Heart right ventricle (tissue), 16 donors: ENCODE measurements at regions of chr4 and their contacts with region 1.

Region 1: DNA sequence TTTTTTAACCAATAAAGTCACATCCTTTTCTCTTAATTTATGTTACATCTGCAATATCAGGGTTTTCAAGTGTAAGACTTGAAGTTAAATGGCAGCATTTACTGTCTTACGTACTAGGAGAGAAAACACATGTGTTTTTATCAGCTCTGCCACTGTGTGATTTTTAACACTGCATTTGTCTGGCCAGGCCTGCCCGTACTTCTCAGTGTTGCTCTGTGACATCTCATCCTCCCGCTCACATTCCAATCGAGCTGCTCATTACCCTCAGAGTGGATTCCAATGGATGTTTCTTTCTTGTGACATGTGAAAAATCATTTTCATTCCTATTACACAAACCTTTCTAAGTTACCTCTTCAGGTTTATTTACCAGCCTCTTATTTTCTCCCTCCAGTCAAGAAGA is 420.3 kb downstream of the FAT4 start:
- DNase-seq: peak in 1 of 2 donors; percentile 18
- ATAC-seq: peak in 7 of 8 donors; percentile 56 to 96 (median 83)
- H3K4me3 ChIP-seq: no peak overlapping the region
- H3K27ac ChIP-seq: peak overlapping the region in 4 of 10 donors; percentile 3 to 53 (median 23)
- H3K4me1 ChIP-seq: peaks cover 0 to 30% (median 19%) of the 10 kb centered on the region in 9 donors
- H3K27me3 ChIP-seq: no peaks in the 10 kb centered on the region
- CTCF ChIP-seq: no peak

Region 2: DNA sequence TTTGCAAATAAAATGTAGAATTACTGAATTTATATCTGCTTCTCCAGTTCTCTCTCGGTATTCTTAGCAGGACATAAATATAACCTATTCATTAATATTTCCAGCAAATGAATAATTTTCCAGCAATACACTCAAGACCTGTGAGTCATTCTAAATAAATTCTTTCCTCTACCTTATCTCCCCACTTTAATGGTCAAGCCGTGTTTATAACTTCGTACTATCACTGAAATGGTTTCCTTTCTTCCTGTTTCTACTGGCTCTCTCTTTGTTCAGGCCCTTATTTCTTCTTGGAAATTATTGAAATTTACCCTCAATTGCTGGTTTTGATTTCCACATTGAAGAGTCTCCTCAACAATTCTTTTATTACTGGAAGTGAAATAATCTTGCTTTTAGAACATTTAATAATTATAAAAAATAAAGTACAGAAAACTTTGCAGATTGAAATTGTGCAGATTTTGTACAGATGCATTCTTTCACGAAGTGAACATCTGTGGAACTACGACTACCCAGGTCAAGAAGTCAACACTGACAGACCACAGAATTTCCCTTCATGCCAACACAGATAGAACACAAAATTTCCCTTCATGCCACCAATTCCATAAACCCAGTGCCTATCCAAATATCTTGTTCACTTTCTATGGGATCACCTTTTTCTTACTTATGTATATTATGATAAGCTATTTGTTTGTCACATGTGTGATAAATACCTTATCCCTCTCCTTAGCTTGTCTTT is 214.7 kb before region 1 on chr4:
- intact Hi-C with region 1: loop called in 1 of 10 experiments (anchors 10 kb)
- DNase-seq: no peak
- ATAC-seq: peak in 4 of 8 donors; percentile 24 to 77 (median 40)
- H3K4me3 ChIP-seq: no peak overlapping the region
- H3K27ac ChIP-seq: peak overlapping the region in 4 of 10 donors; percentile 25 to 39 (median 34)
- H3K4me1 ChIP-seq: peaks cover 0 to 33% (median 4%) of the 10 kb centered on the region in 9 donors
- H3K27me3 ChIP-seq: no peaks in the 10 kb centered on the region
- CTCF ChIP-seq: no peak

Region 3: DNA sequence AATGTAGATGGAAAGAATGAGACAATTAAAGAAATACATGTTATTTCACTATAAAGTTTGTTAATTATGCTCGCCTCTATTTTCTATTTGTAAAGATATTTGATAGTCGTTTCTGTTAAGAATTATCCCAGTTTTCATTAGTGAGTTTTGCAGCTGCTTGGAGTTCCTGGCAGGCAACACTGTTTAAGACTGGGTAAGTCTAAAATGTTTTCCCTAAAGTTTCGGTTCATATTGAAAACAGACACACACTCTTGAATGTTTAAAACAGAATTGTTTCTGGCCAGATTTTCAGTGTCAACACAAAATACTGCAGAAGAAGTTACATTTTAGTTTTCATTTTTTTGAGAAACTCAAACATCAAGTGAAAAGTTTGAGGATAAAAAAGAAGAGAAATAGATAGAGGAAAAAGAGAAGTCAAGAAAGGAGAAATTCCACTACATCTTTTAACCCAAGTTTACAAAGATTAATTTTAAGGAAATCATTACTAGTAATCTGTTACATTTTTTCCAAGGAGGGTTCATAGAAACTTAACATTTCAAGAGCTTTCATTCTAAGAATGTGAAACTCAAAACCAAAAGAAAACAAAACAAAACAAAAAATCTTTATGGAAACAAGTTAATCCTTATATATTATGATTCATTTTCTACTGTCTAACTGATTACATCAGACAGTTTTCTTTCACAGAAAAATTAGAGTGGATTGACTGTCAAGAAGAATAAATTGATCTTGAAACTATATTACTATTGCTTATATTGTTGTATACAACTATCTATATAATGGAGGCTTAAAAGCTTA is 114.8 kb before region 1 on chr4:
- intact Hi-C with region 1: loop called in 1 of 10 experiments (anchors 10 kb)
- DNase-seq: no peak
- ATAC-seq: no peak
- H3K4me3 ChIP-seq: peak overlapping the region in 4 of 10 donors; percentile 3 to 25 (median 10)
- H3K27ac ChIP-seq: peak overlapping the region in 2 of 10 donors; percentile 1 to 39
- H3K4me1 ChIP-seq: peaks cover 0 to 9% (median 0%) of the 10 kb centered on the region in 9 donors
- H3K27me3 ChIP-seq: no peaks in the 10 kb centered on the region
- CTCF ChIP-seq: no peak

Region 4: GRCh38 chr4:126599746-126600145 is 864.6 kb after region 1 on chr4:
- intact Hi-C with region 1: no loop called
- DNase-seq: no peak
- ATAC-seq: no peak
- H3K4me3 ChIP-seq: no peak overlapping the region
- H3K27ac ChIP-seq: no peak overlapping the region
- H3K4me1 ChIP-seq: no peaks in the 10 kb centered on the region
- H3K27me3 ChIP-seq: no peaks in the 10 kb centered on the region
- CTCF ChIP-seq: no peak